BJ (cell line): ENCODE measurements at regions of chr14 and their contacts with region 1.

Region 1: DNA sequence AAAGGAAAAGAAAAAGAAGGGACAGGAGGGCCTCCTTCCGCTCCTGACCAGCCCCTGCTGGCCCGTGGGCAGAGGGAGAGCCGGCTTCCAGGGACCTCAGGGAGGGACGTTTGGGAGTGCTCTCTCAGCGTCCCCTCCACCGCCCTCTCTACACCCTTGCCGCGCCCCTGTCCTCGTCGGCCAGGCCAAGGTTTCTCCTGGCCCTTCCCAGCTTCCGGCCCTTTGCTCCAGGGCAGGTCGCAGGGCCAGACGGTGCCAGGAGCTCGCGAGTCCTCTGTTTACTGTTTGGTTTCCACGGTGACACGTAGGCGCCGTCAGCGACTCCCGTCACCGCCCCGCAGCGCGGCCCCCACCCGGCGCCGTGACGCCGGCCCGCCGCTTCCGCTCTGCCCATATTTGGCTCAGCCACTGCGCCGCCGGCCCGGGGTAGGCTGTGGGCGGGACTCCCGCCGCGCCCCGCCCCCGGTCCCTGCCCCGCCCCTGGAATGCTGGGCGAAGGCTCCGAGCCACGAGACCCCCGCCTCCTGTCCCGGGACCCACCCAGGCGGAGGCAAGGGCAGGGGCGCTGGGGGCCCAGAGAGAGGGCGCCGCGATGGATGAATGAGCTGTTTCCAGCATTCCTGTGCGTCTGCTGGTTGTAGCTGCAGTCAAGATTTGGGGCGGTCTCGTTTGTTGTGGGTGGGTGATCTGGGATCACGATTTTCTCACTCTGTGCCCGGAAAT is 15.5 kb downstream of the FOS start:
- DNase-seq: peak; percentile 83
- H3K4me3 ChIP-seq: peak overlapping the region; percentile 71
- H3K27me3 ChIP-seq: peaks cover 4% of the 10 kb centered on the region
- CTCF ChIP-seq: 0 out of 2 replicates have a peak, but pooled peaks have one; percentile 6

Region 2: DNA sequence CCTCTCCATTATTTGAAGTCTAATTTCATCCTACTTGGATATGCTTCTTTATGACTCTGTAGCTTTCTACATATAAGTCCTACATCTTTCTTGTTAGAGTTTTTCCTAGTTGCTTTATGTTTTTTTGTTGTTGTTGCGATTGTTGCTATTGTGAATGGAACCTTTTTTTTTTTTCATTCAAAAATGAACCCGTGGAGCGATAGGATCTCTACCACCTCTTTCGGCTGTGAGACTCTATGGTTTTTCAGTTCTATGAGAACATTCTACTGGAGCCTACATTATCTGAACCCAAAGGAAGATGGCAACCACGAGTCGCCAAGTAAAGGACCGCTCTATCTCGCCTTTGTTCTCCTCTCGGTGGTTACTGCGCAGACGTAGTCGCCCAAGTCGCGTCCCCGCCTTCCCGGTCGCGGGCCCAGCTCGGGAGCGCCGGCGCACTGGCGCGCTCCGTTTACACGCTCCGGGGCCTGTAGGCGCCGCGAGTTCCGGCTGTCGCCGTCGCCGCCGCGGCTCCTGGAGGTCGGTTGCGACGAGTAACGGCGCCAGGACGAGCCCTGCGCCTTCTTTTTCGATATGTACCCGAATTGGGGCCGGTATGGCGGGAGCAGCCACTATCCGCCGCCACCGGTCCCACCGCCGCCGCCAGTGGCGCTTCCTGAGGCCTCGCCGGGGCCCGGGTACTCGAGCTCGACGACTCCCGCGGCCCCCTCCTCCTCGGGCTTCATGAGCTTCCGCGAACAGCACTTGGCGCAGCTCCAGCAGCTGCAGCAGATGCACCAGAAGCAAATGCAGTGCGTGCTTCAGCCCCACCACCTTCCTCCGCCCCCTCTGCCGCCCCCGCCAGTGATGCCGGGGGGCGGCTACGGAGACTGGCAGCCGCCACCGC is 530.9 kb before region 1 on chr14 and contains the start of gene YLPM1:
- CTCF ChIA-PET with region 1: no interaction called
- POLR2A ChIA-PET with region 1: no interaction called
- DNase-seq: peak; percentile 78
- H3K4me3 ChIP-seq: peak within 1 kb of the TSS; percentile 96
- H3K27me3 ChIP-seq: no peaks in the 10 kb centered on the region
- CTCF ChIP-seq: peak; percentile 67
- polyA plus RNA-seq, gene YLPM1: 5.5 and 7.2 TPM in 2 replicates

Region 3: GRCh38 chr14:74835645-74836250 is 458.3 kb before region 1 on chr14:
- CTCF ChIA-PET with region 1: no interaction called
- POLR2A ChIA-PET with region 1: interaction called, 13 read pairs
- DNase-seq: no peak
- H3K4me3 ChIP-seq: no peak overlapping the region
- H3K27me3 ChIP-seq: no peaks in the 10 kb centered on the region
- CTCF ChIP-seq: no peak

Region 4: DNA sequence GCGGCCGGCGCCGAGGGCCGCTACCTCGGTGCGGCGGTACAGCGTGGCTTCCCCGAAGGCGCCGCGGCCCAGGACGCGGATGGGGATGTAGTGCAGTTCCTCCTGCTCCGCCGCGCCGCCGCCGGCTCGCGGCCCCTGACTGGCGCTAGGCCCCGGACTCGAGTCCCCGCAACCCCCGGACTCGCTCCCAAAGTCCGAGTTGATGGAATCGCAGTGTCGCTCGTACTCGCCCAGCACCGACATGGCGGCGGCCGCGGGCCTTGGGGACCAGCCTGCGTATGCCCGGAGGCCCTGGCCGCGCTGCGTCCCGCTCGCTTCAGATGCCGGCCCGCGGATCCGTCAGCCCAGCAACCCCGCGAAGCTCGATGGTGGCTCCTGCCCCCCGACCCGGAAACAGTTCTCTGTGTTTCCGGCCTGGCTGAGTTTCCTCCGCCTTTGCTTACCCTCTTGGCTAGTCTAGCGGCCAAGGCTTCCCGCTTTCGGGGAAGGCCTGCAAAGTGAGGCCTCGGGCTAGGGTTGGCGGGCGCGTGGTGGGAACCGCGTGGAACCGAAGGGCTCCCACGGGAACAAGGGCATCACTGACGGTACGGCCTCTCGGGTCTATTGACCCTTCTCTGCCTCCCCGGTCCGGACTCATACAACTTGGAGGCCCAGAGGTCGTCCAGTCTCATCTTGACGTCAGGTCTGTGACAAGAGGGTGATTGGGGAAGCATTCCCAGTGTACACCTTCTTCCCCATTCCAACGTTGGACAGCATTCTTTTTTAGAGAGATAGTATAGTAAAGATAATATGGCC is 167.2 kb before region 1 on chr14 and contains the start of gene NEK9:
- CTCF ChIA-PET with region 1: interaction called, 60 read pairs
- POLR2A ChIA-PET with region 1: interaction called, 6 read pairs
- DNase-seq: no peak
- H3K4me3 ChIP-seq: peak within 1 kb of the TSS; percentile 72
- H3K27me3 ChIP-seq: no peaks in the 10 kb centered on the region
- CTCF ChIP-seq: no peak
- polyA plus RNA-seq, gene NEK9: 38.1 and 53.4 TPM in 2 replicates

Region 5: GRCh38 chr14:75132382-75133086 is 161.5 kb before region 1 on chr14:
- CTCF ChIA-PET with region 1: interaction called, 60 read pairs
- POLR2A ChIA-PET with region 1: no interaction called
- DNase-seq: no peak
- H3K4me3 ChIP-seq: no peak overlapping the region
- H3K27me3 ChIP-seq: no peaks in the 10 kb centered on the region
- CTCF ChIP-seq: peak; percentile 66

Region 6: GRCh38 chr14:75141967-75142366 is 152.1 kb before region 1 on chr14:
- CTCF ChIA-PET with region 1: interaction called, 53 read pairs
- POLR2A ChIA-PET with region 1: interaction called, 4 read pairs
- DNase-seq: no peak
- H3K4me3 ChIP-seq: no peak overlapping the region
- H3K27me3 ChIP-seq: no peaks in the 10 kb centered on the region
- CTCF ChIP-seq: peak; percentile 50

Region 7: GRCh38 chr14:75277000-75277801 is 16.9 kb before region 1 on chr14:
- CTCF ChIA-PET with region 1: interaction called, 14 read pairs
- POLR2A ChIA-PET with region 1: interaction called, 26 read pairs
- DNase-seq: peak; percentile 82
- H3K4me3 ChIP-seq: peak overlapping the region; percentile 87
- H3K27me3 ChIP-seq: no peaks in the 10 kb centered on the region
- CTCF ChIP-seq: no peak

Region 8: GRCh38 chr14:75283162-75283881 is 10.8 kb before region 1 on chr14:
- CTCF ChIA-PET with region 1: interaction called, 17 read pairs
- POLR2A ChIA-PET with region 1: interaction called, 26 read pairs
- DNase-seq: no peak
- H3K4me3 ChIP-seq: no peak overlapping the region
- H3K27me3 ChIP-seq: no peaks in the 10 kb centered on the region; the same call in 1 of the 2 replicates
- CTCF ChIP-seq: no peak

Region 9: GRCh38 chr14:75482366-75482765 is 188.3 kb after region 1 on chr14:
- CTCF ChIA-PET with region 1: no interaction called
- POLR2A ChIA-PET with region 1: no interaction called
- DNase-seq: no peak
- H3K4me3 ChIP-seq: no peak overlapping the region
- H3K27me3 ChIP-seq: peaks cover 8% of the 10 kb centered on the region
- CTCF ChIP-seq: no peak